ENCODE measurements at regions of chrX and their contacts with region 1.

Region 1: GRCh38 chrX:53081925-53082772 is at the start of gene TSPYL2:
- DNase-seq: peak; percentile 93
- H3K4me3 ChIP-seq: peak within 1 kb of the TSS; percentile 77
- H3K27ac ChIP-seq: peak within 1 kb of the TSS; percentile 61
- H3K27me3 ChIP-seq: no peaks in the 10 kb centered on the region
- CTCF ChIP-seq: no peak
- polyA plus RNA-seq, gene TSPYL2: 35.8 and 39.3 TPM in 2 replicates

Region 2: DNA sequence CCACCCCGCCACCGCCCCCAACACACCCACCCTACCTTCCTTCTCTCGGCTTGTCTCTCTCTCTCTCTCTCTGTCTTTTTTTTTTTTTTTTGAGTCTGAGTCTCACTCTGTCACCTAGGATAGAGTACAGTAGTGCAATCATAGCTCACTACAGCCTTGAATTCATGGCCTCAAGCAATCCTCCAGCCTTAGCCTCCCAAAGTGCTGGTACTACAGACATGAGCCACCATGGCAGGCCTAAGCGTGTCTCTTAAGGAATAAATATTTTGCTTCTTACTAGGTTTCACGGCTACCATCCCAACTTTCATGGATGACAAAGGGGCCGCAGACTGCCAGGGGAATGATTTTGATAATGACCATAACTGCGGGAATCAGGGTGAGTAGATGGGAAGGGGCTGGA is 483.3 kb before region 1 on chrX:
- CTCF ChIA-PET with region 1: no interaction called
- POLR2A ChIA-PET with region 1: no interaction called
- DNase-seq: no peak
- H3K4me3 ChIP-seq: no peak overlapping the region
- H3K27ac ChIP-seq: no peak overlapping the region
- H3K27me3 ChIP-seq: no peaks in the 10 kb centered on the region
- CTCF ChIP-seq: no peak

Region 3: GRCh38 chrX:53048169-53049126 is 33.7 kb before region 1 on chrX and contains the start of gene GPR173:
- CTCF ChIA-PET with region 1: no interaction called
- POLR2A ChIA-PET with region 1: interaction called, 12 read pairs
- DNase-seq: peak; percentile 21
- H3K4me3 ChIP-seq: peak within 1 kb of the TSS; percentile 71
- H3K27ac ChIP-seq: peak within 1 kb of the TSS; percentile 57
- H3K27me3 ChIP-seq: no peaks in the 10 kb centered on the region
- CTCF ChIP-seq: no peak
- polyA plus RNA-seq, gene GPR173: 3.8 and 5.2 TPM in 2 replicates

Region 4: GRCh38 chrX:53093748-53094583 is 11.8 kb after region 1 on chrX and contains the start of gene KANTR:
- CTCF ChIA-PET with region 1: no interaction called
- POLR2A ChIA-PET with region 1: interaction called, 14 read pairs
- DNase-seq: peak; percentile 84
- H3K4me3 ChIP-seq: peak within 1 kb of the TSS; percentile 72
- H3K27ac ChIP-seq: peak within 1 kb of the TSS; percentile 85
- H3K27me3 ChIP-seq: no peaks in the 10 kb centered on the region
- CTCF ChIP-seq: 0 out of 2 replicates have a peak, but pooled peaks have one; percentile 2
- polyA plus RNA-seq, gene KANTR: 3.2 and 3.8 TPM in 2 replicates

Measured in AG04450 (cell line).